Left colon (tissue), 2 donors: ENCODE measurements at regions of chr1 and their contacts with region 1.

Region 1: GRCh38 chr1:205664376-205665108 is 15.8 kb downstream of the SLC45A3 start:
- DNase-seq: peak; percentile 49 to 79
- ATAC-seq: peak; percentile 70

Region 2: DNA sequence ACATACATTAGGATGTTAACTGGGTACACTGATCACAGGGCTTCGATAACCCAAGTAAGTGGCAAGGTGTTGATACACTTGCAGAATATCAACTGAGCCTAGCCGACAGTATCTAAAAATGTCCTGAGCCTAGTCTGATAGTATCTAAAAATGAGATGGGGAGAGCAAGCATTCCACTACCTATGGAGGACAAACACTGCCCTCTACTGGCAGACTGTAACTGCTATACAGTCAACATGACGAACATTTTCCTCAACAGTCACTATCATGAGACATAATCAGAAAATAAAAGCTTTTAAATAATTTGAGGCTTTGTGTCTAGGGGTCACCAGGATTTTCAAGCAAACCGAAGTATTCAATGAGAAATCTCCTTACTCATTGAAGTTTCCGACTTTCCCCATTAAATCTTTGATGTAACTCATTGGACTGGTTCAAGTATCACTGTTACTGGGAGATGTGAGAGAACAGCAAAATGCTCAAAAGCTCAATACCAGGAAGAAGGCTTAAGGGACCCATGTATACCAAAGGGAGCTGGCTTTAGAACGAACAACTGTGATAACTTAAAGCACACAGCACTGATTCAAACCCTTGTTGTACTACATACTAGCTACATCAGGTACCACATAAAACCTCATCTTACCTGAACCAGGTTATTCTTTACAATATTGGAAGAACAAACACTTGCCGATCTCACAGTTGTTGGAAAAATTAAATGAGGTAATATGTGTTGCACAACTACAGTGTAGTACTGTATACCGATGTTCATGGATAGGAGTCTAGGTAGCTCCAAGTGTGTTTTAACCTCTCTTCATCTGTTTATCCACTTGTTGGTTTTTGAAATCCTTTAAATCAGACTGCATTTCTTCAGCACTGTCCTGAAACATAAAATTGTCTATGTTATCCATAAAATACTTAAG is 46.8 kb after region 1 on chr1:
- intact Hi-C with region 1: loop called in 1 of 2 experiments (anchors 5 kb)
- DNase-seq: peak; percentile 49 to 75
- ATAC-seq: peak; percentile 79

Region 3: GRCh38 chr1:205858141-205858961 is 193.8 kb after region 1 on chr1:
- intact Hi-C with region 1: no loop called
- DNase-seq: no peak
- ATAC-seq: no peak

Region 4: GRCh38 chr1:205983925-205984725 is 319.6 kb after region 1 on chr1:
- intact Hi-C with region 1: no loop called
- DNase-seq: peak; percentile 50 to 64
- ATAC-seq: peak; percentile 90